Colonic mucosa (tissue), 4 donors: ENCODE measurements at regions of chr11 and their contacts with region 1.

Region 1: DNA sequence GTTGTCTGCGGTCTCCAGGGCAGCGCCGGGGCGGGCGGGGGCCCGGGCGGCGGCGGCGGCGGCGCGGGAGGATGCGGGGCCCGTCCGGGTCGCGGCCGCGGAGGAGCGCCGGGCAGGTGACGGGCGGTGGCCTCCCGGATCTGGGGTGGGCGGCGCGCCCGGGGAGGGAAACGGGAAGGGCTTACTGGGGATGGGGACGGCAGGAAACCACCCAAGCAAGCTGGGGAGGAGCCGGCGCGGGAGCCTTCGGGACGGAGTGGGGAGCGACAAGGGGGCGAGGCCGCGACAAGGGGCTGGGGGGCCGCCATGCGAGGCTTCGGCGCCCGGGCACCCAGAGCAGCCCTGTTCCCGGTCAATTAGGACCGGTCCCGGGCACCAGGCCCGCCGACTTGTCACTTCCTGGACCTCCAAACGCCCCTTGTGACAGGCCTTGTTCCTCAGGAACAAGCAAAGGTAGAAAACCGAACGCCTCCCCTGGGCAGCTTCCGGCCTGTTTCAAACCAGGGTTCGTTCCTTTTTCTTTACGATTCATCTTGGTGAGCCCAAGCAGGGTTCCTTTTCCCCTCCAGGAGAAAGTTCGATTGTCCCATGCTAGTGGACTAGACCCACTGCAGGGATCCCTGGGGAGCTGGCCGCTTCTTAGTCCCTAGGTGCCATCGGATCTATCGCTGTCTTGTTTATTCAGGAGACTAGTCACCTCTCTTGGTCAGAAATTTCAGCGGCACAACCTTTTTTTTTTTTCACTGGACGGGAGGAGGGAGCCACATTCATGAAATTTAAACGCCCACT is 492 bp downstream of the JHY start:
- DNase-seq: peak; percentile 42
- H3K4me3 ChIP-seq: peak overlapping the region; percentile 66
- H3K27ac ChIP-seq: peak overlapping the region; percentile 61
- H3K4me1 ChIP-seq: no peaks in the 10 kb centered on the region
- H3K27me3 ChIP-seq: no peaks in the 10 kb centered on the region
- CTCF ChIP-seq: no peak

Region 2: DNA sequence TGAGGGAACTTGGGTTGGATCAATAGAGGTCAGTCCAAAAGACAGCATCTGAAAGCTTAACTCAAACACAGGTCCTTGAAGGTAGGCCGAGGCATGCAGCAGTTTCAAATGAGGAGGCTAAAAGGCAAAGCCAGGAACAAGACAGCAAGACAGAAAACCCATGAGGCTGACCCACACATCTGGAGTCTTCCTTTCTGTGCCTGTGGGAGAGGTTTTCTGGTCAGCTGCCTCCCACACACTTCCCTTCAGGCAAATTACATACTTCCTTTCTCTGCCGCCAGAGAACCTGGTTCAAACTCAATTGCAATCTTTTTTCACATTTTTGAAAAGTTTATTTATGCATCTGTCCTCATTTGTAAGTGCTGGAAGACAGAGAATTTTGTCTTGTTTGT is 74.6 kb before region 1 on chr11:
- intact Hi-C with region 1: no loop called
- DNase-seq: no peak
- H3K4me3 ChIP-seq: no peak overlapping the region
- H3K27ac ChIP-seq: no peak overlapping the region
- H3K4me1 ChIP-seq: no peaks in the 10 kb centered on the region
- H3K27me3 ChIP-seq: no peaks in the 10 kb centered on the region
- CTCF ChIP-seq: no peak

Region 3: GRCh38 chr11:123033895-123034294 is 150.8 kb after region 1 on chr11:
- intact Hi-C with region 1: no loop called
- DNase-seq: no peak
- H3K4me3 ChIP-seq: no peak overlapping the region
- H3K27ac ChIP-seq: no peak overlapping the region
- H3K4me1 ChIP-seq: no peaks in the 10 kb centered on the region
- H3K27me3 ChIP-seq: no peaks in the 10 kb centered on the region
- CTCF ChIP-seq: no peak

Region 4: GRCh38 chr11:123054301-123055065 is 171.4 kb after region 1 on chr11:
- intact Hi-C with region 1: loop called (anchors 10 kb)
- DNase-seq: no peak
- H3K4me3 ChIP-seq: no peak overlapping the region
- H3K27ac ChIP-seq: no peak overlapping the region
- H3K4me1 ChIP-seq: peaks cover 9% of the 10 kb centered on the region
- H3K27me3 ChIP-seq: no peaks in the 10 kb centered on the region
- CTCF ChIP-seq: peak; percentile 62